Dorsolateral prefrontal cortex (tissue), 120 donors: ENCODE measurements at regions of chr4 and their contacts with region 1.

Region 1: GRCh38 chr4:172813359-172813923 is 355.2 kb upstream of the GALNT7 start:
- DNase-seq: no peak
- H3K4me3 ChIP-seq: no peak overlapping the region
- H3K27ac ChIP-seq: no peak overlapping the region
- H3K27me3 ChIP-seq: peaks cover 0 to 3% (median 0%) of the 10 kb centered on the region in 45 donors
- CTCF ChIP-seq: no peak

Region 2: DNA sequence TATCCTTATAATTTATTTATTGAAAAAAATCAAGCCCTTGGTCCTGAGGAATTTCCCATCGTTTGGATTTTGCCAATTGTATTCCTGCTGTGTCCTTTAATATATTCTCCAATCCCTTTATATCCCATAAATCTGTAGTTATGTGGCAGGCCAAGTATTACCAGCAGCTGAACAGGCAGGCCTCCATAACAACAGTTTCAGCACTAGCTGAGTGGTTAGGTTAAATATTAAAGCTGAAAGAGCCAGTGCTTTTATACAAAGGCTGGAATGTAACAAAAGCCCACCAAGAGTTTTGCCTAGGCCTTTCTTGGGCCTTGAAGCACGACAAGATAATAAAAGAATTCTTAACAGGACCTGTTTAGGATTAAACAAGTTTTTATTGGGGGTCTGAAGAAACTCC is 11.4 kb before region 1 on chr4:
- intact Hi-C with region 1: loop called in 1 of 2 experiments (anchors 1 kb)
- DNase-seq: no peak
- H3K4me3 ChIP-seq: no peak overlapping the region
- H3K27ac ChIP-seq: no peak overlapping the region
- H3K27me3 ChIP-seq: no peaks in the 10 kb centered on the region
- CTCF ChIP-seq: no peak